ENCODE measurements at regions of chr5 and their contacts with region 1.

Region 1: DNA sequence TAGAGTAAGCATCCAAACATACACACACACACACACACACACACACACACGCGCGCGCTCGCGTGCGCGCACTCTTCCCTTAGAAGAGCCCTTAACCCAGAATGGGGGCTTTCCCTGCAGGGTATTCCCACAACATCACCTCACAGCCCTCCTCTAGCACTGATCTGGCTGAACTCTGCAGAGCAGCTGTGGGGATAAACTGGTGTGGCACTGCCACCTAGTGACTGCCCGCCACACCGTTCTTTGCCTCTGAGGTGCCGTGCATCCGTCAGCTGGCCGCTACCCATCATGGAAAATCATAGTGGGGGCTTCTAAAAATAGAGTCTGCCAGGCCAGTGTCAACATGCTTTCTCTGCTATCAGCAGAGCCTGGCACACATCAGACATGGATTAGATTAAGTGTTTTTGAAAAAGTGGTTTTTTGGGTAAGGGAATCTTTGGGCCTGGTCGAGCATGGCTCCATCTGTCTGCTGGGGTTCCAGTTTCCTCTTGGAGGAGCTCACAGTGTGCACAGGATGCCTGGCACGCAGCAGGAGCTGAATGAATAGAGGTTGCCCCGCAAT is 88.1 kb downstream of the KCNN2 start:
- DNase-seq: peak; percentile 74
- H3K4me3 ChIP-seq: peak overlapping the region in 1 of 2 experiments; percentile 46; a peak in 1 of 4 replicates
- H3K27ac ChIP-seq: no peak overlapping the region
- H3K4me1 ChIP-seq: peaks cover 0 to 4% of the 10 kb centered on the region in 2 experiments; a peak in 1 of 4 replicates
- H3K27me3 ChIP-seq: no peaks in the 10 kb centered on the region
- CTCF ChIP-seq: peak; percentile 84
- EP300 ChIP-seq: no peak
- RAD21 ChIP-seq: peak; percentile 88

Region 2: DNA sequence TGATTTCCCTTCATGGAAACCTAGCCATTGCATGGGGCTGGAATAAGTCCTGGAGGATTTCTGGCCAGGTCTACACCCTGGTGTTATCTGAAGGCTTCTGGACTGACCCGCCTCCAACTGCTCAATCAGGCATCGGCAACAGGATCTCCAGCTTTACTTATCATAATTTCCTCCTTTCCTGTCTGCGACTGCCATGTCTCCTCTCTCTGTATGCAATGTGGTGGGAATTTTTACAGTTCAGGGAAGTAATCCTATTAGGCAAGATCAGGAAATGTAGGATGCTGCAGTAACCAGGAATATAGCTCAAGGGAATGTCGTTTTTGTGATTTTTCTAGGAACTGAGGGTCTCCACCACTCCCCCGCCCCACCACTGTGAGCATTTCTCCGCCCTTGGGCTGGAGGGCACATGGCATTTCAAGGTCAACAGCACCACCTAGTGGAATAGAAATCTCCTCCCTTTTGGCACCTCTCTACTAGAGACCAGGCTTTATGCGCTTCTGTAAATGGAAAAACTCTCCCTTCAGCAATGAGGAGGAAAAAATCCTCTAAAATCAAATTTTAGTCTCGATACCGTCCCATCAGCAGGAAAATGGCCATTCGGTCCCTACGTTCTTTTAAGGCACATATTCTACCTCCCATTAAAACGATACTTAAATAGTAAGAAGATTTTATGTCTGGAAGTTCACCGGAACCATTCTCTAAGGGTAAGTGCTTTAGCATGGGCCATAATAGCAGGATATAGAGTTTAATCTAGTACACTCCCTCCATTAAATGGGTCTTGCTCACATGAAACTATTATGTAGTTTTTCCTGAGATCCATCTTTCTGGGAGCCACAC is 843.4 kb before region 1 on chr5:
- CTCF ChIA-PET with region 1: interaction called, 60 read pairs
- POLR2A ChIA-PET with region 1: no interaction called
- DNase-seq: peak; percentile 66
- H3K4me3 ChIP-seq: peak overlapping the region; percentile 22 to 46; a peak in 2 of 4 replicates
- H3K27ac ChIP-seq: peak overlapping the region in 1 of 2 experiments; percentile 47; a peak in 1 of 4 replicates
- H3K4me1 ChIP-seq: peaks cover 0 to 5% of the 10 kb centered on the region in 2 experiments; a peak in 1 of 4 replicates
- H3K27me3 ChIP-seq: no peaks in the 10 kb centered on the region
- CTCF ChIP-seq: peak; percentile 78
- EP300 ChIP-seq: no peak
- RAD21 ChIP-seq: peak; percentile 90

Region 3: DNA sequence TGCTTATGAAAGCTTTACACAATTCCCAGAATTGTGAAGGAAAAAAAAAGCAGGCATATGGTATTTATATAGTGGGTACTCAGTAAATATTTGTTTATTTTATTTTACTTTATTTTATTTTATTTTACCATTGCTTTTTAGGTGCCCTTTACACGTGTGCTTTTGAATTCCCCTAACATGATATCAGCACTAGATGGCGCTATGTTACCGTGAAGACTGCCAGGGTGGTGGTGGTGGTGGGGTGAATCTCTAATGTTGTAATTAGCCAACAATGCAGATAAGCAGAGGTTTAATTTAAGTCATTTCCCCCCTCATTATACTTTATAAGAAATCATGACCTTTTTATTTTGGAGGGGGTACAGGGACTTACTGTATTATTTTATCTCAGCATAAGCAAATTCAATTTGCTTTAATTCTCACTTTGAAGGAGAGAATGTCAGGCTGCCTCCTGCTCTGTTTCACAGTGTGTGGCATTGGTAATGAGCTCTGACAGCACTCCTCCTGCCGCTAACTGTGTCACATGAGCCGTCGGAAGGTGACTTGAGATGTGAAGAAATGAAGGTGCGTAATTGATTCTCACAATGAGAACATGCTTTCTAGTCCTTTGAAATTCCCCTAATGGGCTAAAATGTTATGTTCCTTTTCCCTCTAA is 770.9 kb before region 1 on chr5:
- CTCF ChIA-PET with region 1: interaction called, 69 read pairs
- POLR2A ChIA-PET with region 1: no interaction called
- DNase-seq: peak; percentile 39
- H3K4me3 ChIP-seq: no peak overlapping the region
- H3K27ac ChIP-seq: no peak overlapping the region
- H3K4me1 ChIP-seq: no peaks in the 10 kb centered on the region
- H3K27me3 ChIP-seq: no peaks in the 10 kb centered on the region
- CTCF ChIP-seq: peak; percentile 78
- EP300 ChIP-seq: no peak
- RAD21 ChIP-seq: peak; percentile 86

Region 4: DNA sequence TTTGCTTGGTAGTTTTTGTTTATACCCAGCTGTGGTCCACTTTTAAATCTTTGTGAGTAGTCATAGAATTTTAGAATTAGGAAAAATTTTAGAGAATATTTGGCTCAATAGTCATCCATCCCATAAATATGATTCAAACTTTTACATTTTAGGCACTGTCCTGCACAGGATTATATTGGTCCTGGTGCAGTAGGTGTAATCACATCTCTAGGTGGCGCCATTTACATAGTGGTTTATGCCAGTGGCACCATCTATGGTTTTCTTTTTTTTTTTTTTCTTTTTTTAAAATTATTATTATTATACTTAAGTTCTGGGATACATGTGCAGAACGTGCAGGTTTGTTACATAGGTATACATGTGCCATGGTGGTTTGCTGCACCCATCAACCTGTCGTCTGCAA is 348.8 kb before region 1 on chr5:
- CTCF ChIA-PET with region 1: interaction called, 14 read pairs
- POLR2A ChIA-PET with region 1: no interaction called
- DNase-seq: peak; percentile 12
- H3K4me3 ChIP-seq: no peak overlapping the region
- H3K27ac ChIP-seq: no peak overlapping the region
- H3K4me1 ChIP-seq: no peaks in the 10 kb centered on the region
- H3K27me3 ChIP-seq: no peaks in the 10 kb centered on the region
- CTCF ChIP-seq: peak; percentile 68
- EP300 ChIP-seq: no peak
- RAD21 ChIP-seq: peak; percentile 59

Region 5: GRCh38 chr5:114435885-114436299 is 14.0 kb before region 1 on chr5:
- CTCF ChIA-PET with region 1: interaction called, 14 read pairs
- POLR2A ChIA-PET with region 1: no interaction called
- DNase-seq: no peak
- H3K4me3 ChIP-seq: no peak overlapping the region; a peak in 1 of 4 replicates
- H3K27ac ChIP-seq: no peak overlapping the region
- H3K4me1 ChIP-seq: no peaks in the 10 kb centered on the region
- H3K27me3 ChIP-seq: no peaks in the 10 kb centered on the region
- CTCF ChIP-seq: no peak
- EP300 ChIP-seq: no peak
- RAD21 ChIP-seq: no peak

Region 6: DNA sequence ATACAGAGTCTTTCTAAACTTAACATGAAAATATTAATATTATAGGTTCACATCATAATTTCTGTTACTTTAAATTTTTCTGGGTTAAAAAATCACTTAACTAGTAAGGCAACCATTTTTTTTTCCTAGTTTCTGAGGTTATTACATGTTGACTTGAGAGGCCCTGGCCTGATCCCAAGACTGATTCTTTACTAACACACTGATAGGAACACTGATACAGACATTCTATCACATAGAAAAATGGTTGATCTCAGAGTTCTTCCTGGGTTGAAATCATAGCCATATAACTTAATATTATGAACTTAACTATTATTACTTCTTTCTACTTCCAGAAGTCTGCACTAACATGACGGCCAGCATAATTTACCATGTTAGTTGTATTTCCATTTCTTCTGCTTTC is 1434.8 kb after region 1 on chr5:
- CTCF ChIA-PET with region 1: no interaction called
- POLR2A ChIA-PET with region 1: no interaction called
- DNase-seq: no peak
- H3K4me3 ChIP-seq: no peak overlapping the region
- H3K27ac ChIP-seq: no peak overlapping the region
- H3K4me1 ChIP-seq: no peaks in the 10 kb centered on the region
- H3K27me3 ChIP-seq: no peaks in the 10 kb centered on the region
- CTCF ChIP-seq: no peak
- EP300 ChIP-seq: no peak
- RAD21 ChIP-seq: no peak